Activated T-helper 1 cell treated with anti-CD3 and anti-CD28 coated beads, Interleukin-12 subunit alpha, Interleukin-12 subunit beta, Interleukin-2, Interleukin-4 antibody, amounts not matched to agents 30 ng/mL and 10 ng/mL and 1 ng/mL, durations not matched to agents 14 hours and 24 hours and 36 hours (primary cell): ENCODE measurements at regions of chr21 and their contacts with region 1.

Region 1: GRCh38 chr21:37257967-37258877 is 8.9 kb downstream of the VPS26C start:
- DNase-seq: peak; percentile 83
- H3K4me3 Mint-ChIP-seq: peak overlapping the region; percentile 95
- H3K27ac Mint-ChIP-seq: peak overlapping the region; percentile 100
- H3K4me1 Mint-ChIP-seq: peaks cover 56% of the 10 kb centered on the region
- H3K27me3 Mint-ChIP-seq: peaks cover 2% of the 10 kb centered on the region

Region 2: GRCh38 chr21:37072988-37073416 is 185.2 kb before region 1 on chr21 and contains the starts of genes PIGP and TTC3:
- intact Hi-C with region 1: loop called (anchors 2 kb)
- DNase-seq: peak; percentile 93
- H3K4me3 Mint-ChIP-seq: peak within 1 kb of the TSS; percentile 95
- H3K27ac Mint-ChIP-seq: peak within 1 kb of the TSS; percentile 95
- H3K4me1 Mint-ChIP-seq: peaks cover 50% of the 10 kb centered on the region
- H3K27me3 Mint-ChIP-seq: peaks cover 2% of the 10 kb centered on the region
- total RNA-seq, gene PIGP: 18.2 and 20.1 TPM in 2 replicates
- total RNA-seq, gene TTC3: 61.8 and 69.3 TPM in 2 replicates